ENCODE measurements at regions of chr12 and their contacts with region 1.

Region 1: GRCh38 chr12:1650260-1650977 is 21.4 kb downstream of the WNT5B start:
- DNase-seq: no peak
- H3K4me3 ChIP-seq: no peak overlapping the region
- H3K4me3 Mint-ChIP-seq: no peak overlapping the region
- H3K27ac ChIP-seq: no peak overlapping the region
- H3K27ac Mint-ChIP-seq: peak overlapping the region in 1 of 7 donors; percentile 53
- H3K4me1 ChIP-seq: no peaks in the 10 kb centered on the region
- H3K4me1 Mint-ChIP-seq: peaks cover 0 to 4% (median 3%) of the 10 kb centered on the region in 4 donors
- H3K27me3 ChIP-seq: no peaks in the 10 kb centered on the region
- H3K27me3 Mint-ChIP-seq: peaks cover 6 to 15% of the 10 kb centered on the region in 2 donors

Region 2: GRCh38 chr12:1099158-1099557 is 551.3 kb before region 1 on chr12:
- CTCF ChIA-PET with region 1: no interaction called
- POLR2A ChIA-PET with region 1: no interaction called
- intact Hi-C with region 1: no loop called
- DNase-seq: no peak
- H3K4me3 ChIP-seq: no peak overlapping the region
- H3K4me3 Mint-ChIP-seq: no peak overlapping the region
- H3K27ac ChIP-seq: no peak overlapping the region
- H3K27ac Mint-ChIP-seq: no peak overlapping the region
- H3K4me1 ChIP-seq: no peaks in the 10 kb centered on the region
- H3K4me1 Mint-ChIP-seq: peaks cover 10 to 26% (median 15%) of the 10 kb centered on the region in 4 donors
- H3K27me3 ChIP-seq: no peaks in the 10 kb centered on the region
- H3K27me3 Mint-ChIP-seq: no peaks in the 10 kb centered on the region

Region 3: DNA sequence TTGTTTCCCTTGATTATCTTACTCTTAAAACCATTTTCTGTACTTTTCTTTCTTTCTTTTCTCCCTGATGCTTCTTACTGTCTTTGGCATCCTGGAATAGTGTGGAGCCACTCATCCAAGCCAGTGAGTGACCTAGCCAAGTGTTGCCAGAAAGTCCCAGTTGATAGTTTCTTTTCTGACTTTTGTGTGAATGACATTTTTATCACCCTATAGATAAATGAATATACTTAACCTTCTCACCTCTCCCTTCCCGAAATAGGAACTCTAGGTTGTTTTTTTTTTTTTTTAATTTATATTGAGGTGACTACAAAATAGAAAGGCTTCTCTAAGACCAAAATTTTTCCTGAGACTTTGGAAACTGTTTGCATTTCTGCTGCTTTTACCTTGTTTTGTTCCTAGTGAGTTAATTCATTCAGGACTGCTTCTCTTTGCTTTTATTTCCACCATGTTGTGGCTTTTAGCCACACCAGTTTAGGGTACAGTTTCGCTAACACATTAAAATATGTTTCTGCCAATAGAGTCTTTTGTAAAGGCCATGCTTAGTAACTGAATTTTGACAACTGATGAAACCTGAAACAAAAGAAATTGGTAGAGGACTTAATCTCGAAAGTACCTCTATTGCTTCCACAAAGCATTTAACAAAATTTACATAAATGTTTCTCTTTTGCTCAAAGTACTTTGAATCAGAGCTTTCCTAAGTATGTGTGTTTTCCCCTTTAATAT is 464.8 kb before region 1 on chr12:
- CTCF ChIA-PET with region 1: no interaction called
- POLR2A ChIA-PET with region 1: no interaction called
- intact Hi-C with region 1: no loop called
- DNase-seq: no peak
- H3K4me3 ChIP-seq: no peak overlapping the region
- H3K4me3 Mint-ChIP-seq: no peak overlapping the region
- H3K27ac ChIP-seq: no peak overlapping the region
- H3K27ac Mint-ChIP-seq: no peak overlapping the region
- H3K4me1 ChIP-seq: no peaks in the 10 kb centered on the region
- H3K4me1 Mint-ChIP-seq: peaks cover 0 to 2% (median 0%) of the 10 kb centered on the region in 4 donors
- H3K27me3 ChIP-seq: no peaks in the 10 kb centered on the region
- H3K27me3 Mint-ChIP-seq: no peaks in the 10 kb centered on the region

Region 4: DNA sequence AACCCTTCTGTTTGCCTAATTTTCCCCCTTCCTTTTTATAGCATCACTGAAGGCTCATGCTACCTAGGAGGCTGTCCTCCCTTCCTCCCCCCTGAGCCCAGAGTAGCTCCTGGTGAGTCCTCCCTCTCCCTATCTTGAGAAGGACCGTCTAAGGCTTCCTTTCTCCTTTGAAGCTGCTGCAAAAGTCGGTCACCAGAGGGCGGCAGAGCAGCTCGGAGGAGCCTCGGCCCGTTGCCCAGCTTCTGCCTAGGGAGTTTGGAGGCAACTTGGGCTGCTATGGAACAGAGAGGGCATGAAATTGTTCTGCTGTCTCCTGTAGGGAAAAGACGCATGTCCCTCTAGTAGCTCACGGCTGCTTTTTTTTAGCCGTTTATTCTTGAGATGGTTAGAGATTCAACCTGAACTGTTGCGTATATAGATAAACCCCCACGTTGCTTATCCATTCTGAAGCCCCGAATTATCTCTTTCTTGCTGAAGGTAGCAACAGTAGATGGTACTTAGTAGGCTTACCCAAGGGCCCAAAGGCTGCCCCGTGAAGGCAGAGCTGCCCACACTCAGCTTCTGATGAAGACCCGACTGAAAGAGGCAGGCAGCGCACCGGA is 15.7 kb before region 1 on chr12:
- CTCF ChIA-PET with region 1: interaction called, 27 read pairs
- POLR2A ChIA-PET with region 1: no interaction called
- intact Hi-C with region 1: no loop called
- DNase-seq: peak in 4 of 5 donors; percentile 36 to 46 (median 40)
- H3K4me3 ChIP-seq: no peak overlapping the region
- H3K4me3 Mint-ChIP-seq: no peak overlapping the region
- H3K27ac ChIP-seq: no peak overlapping the region
- H3K27ac Mint-ChIP-seq: no peak overlapping the region
- H3K4me1 ChIP-seq: peaks cover 12% of the 10 kb centered on the region
- H3K4me1 Mint-ChIP-seq: peaks cover 5 to 15% (median 12%) of the 10 kb centered on the region in 4 donors
- H3K27me3 ChIP-seq: peaks cover 17% of the 10 kb centered on the region
- H3K27me3 Mint-ChIP-seq: peaks cover 27 to 39% of the 10 kb centered on the region in 2 donors

Region 5: GRCh38 chr12:1661553-1662335 is 11.3 kb after region 1 on chr12:
- CTCF ChIA-PET with region 1: interaction called, 20 read pairs
- POLR2A ChIA-PET with region 1: interaction called, 8 read pairs
- intact Hi-C with region 1: no loop called
- DNase-seq: peak; percentile 84 to 92 (median 90)
- H3K4me3 ChIP-seq: peak overlapping the region in 1 of 2 donors; percentile 49
- H3K4me3 Mint-ChIP-seq: peak overlapping the region; percentile 72 to 84 (median 82)
- H3K27ac ChIP-seq: no peak overlapping the region
- H3K27ac Mint-ChIP-seq: peak overlapping the region; percentile 88 to 93 (median 91)
- H3K4me1 ChIP-seq: peaks cover 16% of the 10 kb centered on the region
- H3K4me1 Mint-ChIP-seq: peaks cover 22 to 55% (median 29%) of the 10 kb centered on the region in 4 donors
- H3K27me3 ChIP-seq: no peaks in the 10 kb centered on the region
- H3K27me3 Mint-ChIP-seq: no peaks in the 10 kb centered on the region

Region 6: DNA sequence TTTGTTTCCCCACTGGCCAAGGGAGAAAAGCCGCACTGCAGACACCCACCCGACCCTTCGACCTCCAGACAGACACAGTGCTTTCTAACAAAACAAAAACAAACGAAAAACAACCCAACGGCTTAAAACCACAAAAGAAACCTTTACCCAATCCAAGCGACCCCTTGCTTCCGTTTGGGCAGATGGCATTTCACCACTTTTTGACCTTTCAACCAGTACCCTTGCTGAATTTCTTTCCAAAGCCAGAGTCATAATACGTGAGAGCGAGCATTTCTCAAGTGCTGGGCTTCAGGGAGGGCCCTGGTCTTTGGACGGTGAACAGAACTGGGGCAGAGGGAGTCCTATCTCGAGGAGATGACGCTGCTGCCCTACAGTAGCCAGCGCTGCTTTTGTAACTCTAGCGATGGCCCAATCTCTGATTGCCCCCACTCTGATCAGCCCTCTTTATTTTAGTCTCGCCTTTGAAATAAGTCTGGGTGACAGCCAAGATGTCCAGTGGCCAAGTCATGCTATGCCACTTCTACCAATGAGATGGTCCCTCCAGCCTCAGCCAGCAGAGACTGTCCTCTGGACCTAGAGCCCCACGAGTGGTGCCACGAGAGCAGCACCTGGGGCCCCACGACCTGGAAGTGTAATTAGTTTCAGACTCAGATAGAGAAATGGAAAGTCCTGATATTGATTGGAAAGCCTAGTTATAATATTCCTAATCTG is 18.6 kb after region 1 on chr12:
- CTCF ChIA-PET with region 1: interaction called, 10 read pairs
- POLR2A ChIA-PET with region 1: interaction called, 5 read pairs
- intact Hi-C with region 1: no loop called
- DNase-seq: no peak
- H3K4me3 ChIP-seq: no peak overlapping the region
- H3K4me3 Mint-ChIP-seq: peak overlapping the region in 7 of 8 donors; percentile 0 to 66 (median 27)
- H3K27ac ChIP-seq: no peak overlapping the region
- H3K27ac Mint-ChIP-seq: peak overlapping the region in 6 of 7 donors; percentile 57 to 88 (median 62)
- H3K4me1 ChIP-seq: peaks cover 35% of the 10 kb centered on the region
- H3K4me1 Mint-ChIP-seq: peaks cover 34 to 48% (median 40%) of the 10 kb centered on the region in 4 donors
- H3K27me3 ChIP-seq: no peaks in the 10 kb centered on the region
- H3K27me3 Mint-ChIP-seq: no peaks in the 10 kb centered on the region